ENCODE measurements at regions of chr3 and their contacts with region 1.

Region 1: DNA sequence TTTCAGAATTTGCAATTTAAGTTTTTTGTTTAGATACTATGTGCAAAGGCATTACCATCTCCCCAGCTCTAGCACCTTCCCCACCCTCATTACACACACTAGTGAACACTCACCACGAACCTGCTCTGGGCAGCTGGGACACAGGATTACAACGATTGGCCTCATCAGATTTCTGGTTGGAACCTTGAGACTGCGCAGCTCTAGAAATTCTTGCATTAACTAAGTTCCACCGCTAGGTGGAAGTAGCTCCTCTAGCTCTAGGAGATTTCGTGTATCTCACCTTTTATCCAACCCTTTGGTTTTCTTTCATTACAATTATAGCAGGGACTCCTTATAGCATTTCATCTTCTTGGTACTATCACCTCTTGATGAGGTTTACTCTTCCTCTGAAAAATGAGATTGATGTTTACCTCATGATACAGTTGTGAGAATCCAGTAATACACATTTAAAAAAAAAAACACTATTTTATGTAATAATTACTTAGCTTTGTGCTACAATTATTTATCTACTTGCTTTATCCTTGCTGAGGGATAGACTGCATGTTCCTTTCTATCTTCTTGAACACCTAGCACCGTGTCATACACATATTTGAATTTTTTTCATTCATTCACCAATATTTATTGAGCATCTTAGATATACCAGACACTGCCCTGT is 28.7 kb upstream of the PLOD2 start:
- DNase-seq: peak; percentile 10
- H3K4me3 ChIP-seq: no peak overlapping the region
- H3K27ac ChIP-seq: no peak overlapping the region
- H3K27me3 ChIP-seq: no peaks in the 10 kb centered on the region
- CTCF ChIP-seq: peak; percentile 80

Region 2: DNA sequence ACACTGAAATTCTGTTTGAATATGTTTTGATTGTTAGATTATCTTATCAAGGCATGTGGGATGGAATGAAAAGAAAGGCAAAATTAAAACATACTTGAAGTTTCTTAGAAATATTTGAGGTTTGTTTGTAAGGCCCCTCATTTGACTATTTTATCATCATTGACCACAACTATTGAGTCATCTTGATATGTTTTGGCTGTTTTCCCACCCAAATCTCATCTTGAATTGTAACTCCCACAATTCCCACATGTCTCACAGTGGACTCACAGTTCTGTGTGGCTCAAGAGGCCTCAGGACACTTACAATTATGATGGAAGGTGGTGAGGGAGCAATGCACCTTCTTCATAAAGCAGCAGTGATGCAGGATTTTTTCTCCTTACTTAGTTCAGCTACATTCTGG is 945.8 kb before region 1 on chr3:
- CTCF ChIA-PET with region 1: no interaction called
- POLR2A ChIA-PET with region 1: no interaction called
- DNase-seq: peak; percentile 37
- H3K4me3 ChIP-seq: no peak overlapping the region
- H3K27ac ChIP-seq: no peak overlapping the region
- H3K27me3 ChIP-seq: no peaks in the 10 kb centered on the region
- CTCF ChIP-seq: no peak

Region 3: GRCh38 chr3:145518639-145519038 is 671.0 kb before region 1 on chr3:
- CTCF ChIA-PET with region 1: no interaction called
- POLR2A ChIA-PET with region 1: no interaction called
- DNase-seq: no peak
- H3K4me3 ChIP-seq: no peak overlapping the region
- H3K27ac ChIP-seq: no peak overlapping the region
- H3K27me3 ChIP-seq: no peaks in the 10 kb centered on the region
- CTCF ChIP-seq: no peak

Region 4: GRCh38 chr3:145936971-145937370 is 252.7 kb before region 1 on chr3:
- CTCF ChIA-PET with region 1: no interaction called
- POLR2A ChIA-PET with region 1: no interaction called
- DNase-seq: no peak
- H3K4me3 ChIP-seq: no peak overlapping the region
- H3K27ac ChIP-seq: no peak overlapping the region
- H3K27me3 ChIP-seq: no peaks in the 10 kb centered on the region
- CTCF ChIP-seq: no peak

Region 5: DNA sequence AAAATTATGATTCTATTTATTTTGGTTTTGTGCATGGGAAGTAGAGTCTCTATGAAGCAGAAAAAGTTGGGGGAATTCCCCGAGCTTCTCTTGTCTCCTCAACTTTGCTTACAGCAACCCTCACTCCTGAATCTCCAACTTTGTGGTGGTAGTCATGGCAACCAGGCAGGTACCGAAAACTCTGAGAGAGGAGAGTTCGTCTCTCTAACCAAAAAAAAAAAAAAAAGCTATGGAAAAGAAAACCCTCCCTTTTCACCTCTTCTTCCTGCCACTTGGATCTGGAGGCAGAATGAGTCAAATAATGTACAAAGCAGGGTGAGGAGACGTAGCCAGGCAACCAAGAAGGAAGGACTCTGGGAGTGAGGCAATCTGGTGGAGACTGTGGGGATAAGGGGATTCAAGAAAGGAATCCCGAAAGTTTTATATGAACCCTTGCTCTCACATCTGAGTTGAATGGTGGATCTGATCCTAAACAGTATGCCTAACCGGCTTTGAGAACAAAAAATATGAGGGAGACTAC is 136.8 kb before region 1 on chr3:
- CTCF ChIA-PET with region 1: interaction called, 270 read pairs
- POLR2A ChIA-PET with region 1: no interaction called
- DNase-seq: no peak
- H3K4me3 ChIP-seq: no peak overlapping the region
- H3K27ac ChIP-seq: no peak overlapping the region
- H3K27me3 ChIP-seq: no peaks in the 10 kb centered on the region
- CTCF ChIP-seq: no peak

Region 6: GRCh38 chr3:146145642-146146041 is 44.0 kb before region 1 on chr3:
- CTCF ChIA-PET with region 1: interaction called, 14 read pairs
- POLR2A ChIA-PET with region 1: no interaction called
- DNase-seq: no peak
- H3K4me3 ChIP-seq: no peak overlapping the region
- H3K27ac ChIP-seq: no peak overlapping the region
- H3K27me3 ChIP-seq: no peaks in the 10 kb centered on the region
- CTCF ChIP-seq: no peak

Region 7: GRCh38 chr3:146177519-146177918 is 12.1 kb before region 1 on chr3:
- CTCF ChIA-PET with region 1: interaction called, 54 read pairs
- POLR2A ChIA-PET with region 1: no interaction called
- DNase-seq: no peak
- H3K4me3 ChIP-seq: no peak overlapping the region
- H3K27ac ChIP-seq: no peak overlapping the region
- H3K27me3 ChIP-seq: no peaks in the 10 kb centered on the region
- CTCF ChIP-seq: no peak

Region 8: GRCh38 chr3:146313411-146314111 is 123.9 kb after region 1 on chr3:
- CTCF ChIA-PET with region 1: interaction called, 12 read pairs
- POLR2A ChIA-PET with region 1: no interaction called
- DNase-seq: peak; percentile 52
- H3K4me3 ChIP-seq: no peak overlapping the region
- H3K27ac ChIP-seq: no peak overlapping the region
- H3K27me3 ChIP-seq: no peaks in the 10 kb centered on the region
- CTCF ChIP-seq: no peak

Region 9: DNA sequence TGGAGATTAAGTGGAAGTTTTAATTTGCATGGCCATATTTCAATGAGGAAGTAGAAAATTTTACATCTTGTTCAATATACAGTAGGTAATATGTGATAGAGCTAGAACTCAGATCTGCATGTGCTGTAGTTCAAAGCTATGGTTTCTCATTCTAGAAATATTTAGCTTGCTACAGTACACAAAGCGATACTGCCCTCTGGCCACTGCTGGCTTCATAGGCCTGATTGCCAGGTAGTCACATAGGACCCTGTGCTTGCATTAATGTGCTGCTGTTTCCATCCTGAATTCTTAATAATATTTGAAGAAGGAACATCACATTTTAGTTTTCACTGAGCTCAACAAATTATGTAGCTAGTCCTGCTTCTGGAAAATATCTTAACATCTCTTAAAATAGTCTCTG is 192.7 kb after region 1 on chr3:
- CTCF ChIA-PET with region 1: interaction called, 28 read pairs
- POLR2A ChIA-PET with region 1: no interaction called
- DNase-seq: no peak
- H3K4me3 ChIP-seq: no peak overlapping the region
- H3K27ac ChIP-seq: no peak overlapping the region
- H3K27me3 ChIP-seq: no peaks in the 10 kb centered on the region
- CTCF ChIP-seq: peak; percentile 45

Region 10: DNA sequence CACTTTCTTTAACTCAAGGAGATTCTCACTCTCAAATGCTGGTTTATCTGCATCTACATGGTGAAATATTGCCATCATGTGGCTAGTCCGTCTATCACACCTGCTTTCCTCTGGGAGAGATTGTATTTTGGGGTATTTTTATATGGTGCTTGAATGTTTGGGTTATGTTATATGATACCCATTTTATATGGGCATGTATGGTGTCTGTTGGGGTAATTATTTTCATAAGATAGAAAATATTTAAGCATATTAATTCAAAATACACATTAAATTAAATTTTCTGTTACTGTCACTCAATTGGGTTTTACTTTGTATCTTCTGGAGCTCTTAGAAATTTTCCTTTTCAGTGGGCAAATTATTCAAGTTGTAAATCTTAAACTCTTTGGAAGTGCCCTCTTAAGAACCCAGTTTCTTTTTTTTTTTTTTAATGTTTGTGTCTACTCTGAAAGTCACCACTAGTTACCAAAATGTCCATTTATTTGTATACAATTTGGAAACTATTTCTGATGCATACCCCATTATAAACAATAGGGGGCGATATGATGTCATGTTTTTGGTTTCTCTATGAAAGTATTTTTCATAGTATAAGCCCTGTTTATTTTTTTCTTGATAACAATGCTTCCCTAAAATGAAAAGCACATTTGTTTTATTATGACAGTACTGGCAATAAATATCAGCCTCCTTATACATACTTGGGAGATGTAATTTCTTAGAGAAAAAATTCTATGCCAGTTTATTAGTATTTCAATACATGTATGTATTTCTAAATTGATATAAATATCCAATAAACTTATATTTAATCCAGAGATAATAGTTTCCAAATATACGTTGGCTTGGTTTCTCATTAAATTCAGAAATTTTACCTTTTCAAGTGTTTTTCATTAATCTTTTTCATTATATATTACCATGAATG is 451.6 kb after region 1 on chr3:
- CTCF ChIA-PET with region 1: interaction called, 12 read pairs
- POLR2A ChIA-PET with region 1: no interaction called
- DNase-seq: peak; percentile 8
- H3K4me3 ChIP-seq: no peak overlapping the region
- H3K27ac ChIP-seq: no peak overlapping the region
- H3K27me3 ChIP-seq: no peaks in the 10 kb centered on the region
- CTCF ChIP-seq: peak; percentile 57

Measured in AG04450 (cell line).